ENCODE measurements at regions of chr18 and their contacts with region 1.

Region 1: GRCh38 chr18:6561420-6561861 is 146.7 kb upstream of the L3MBTL4 start:
- DNase-seq: peak; percentile 89 to 91
- H3K4me3 ChIP-seq: no peak overlapping the region
- H3K4me3 Mint-ChIP-seq: peak overlapping the region; percentile 56
- H3K27ac Mint-ChIP-seq: peak overlapping the region; percentile 79
- H3K4me1 ChIP-seq: peaks cover 71% of the 10 kb centered on the region
- H3K4me1 Mint-ChIP-seq: peaks cover 39% of the 10 kb centered on the region
- H3K27me3 ChIP-seq: no peaks in the 10 kb centered on the region
- H3K27me3 Mint-ChIP-seq: no peaks in the 10 kb centered on the region
- CTCF ChIP-seq: no peak

Region 2: GRCh38 chr18:6543330-6543908 is 18.0 kb before region 1 on chr18:
- CTCF ChIA-PET with region 1: interaction called, 6 read pairs
- POLR2A ChIA-PET with region 1: no interaction called
- intact Hi-C with region 1: loop called (anchors 1 kb)
- DNase-seq: peak in 1 of 2 experiments; percentile 35
- H3K4me3 ChIP-seq: no peak overlapping the region
- H3K4me3 Mint-ChIP-seq: no peak overlapping the region
- H3K27ac Mint-ChIP-seq: no peak overlapping the region
- H3K4me1 ChIP-seq: peaks cover 7% of the 10 kb centered on the region
- H3K4me1 Mint-ChIP-seq: peaks cover 7% of the 10 kb centered on the region
- H3K27me3 ChIP-seq: no peaks in the 10 kb centered on the region
- H3K27me3 Mint-ChIP-seq: no peaks in the 10 kb centered on the region
- CTCF ChIP-seq: peak; percentile 64 to 65

Region 3: DNA sequence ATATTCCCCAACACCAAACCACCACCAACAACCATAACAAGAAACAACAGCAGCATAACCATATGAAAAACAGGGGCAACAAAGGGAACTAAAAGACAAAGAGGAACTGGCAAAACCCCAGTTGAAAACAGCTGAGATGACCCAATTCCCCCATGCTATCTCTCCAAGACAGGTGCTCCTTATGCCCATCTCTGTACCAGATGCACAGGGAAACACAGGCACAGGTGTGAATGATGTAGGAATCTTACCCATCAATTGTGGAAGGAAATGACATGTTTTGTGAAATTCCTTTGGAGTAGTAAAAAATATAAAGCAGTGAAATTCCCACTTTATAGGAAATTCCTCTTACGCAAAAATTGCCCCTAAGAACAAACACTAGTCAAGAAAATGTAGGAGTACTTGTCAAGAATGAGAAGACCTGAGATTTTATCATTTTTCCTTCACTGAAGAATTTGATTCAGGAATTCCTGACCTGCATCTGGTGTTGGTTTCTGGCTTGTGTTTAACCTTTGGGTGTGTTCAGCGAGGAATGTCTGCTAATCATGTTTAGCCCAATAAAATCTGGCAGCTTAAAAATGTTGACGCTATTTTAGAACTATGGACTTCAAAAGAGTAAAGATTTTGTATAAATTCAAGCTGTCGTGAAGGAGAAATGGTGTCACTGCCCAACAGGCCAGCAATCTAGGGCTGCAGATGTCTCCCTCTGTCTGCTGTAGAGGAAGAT is 100.4 kb after region 1 on chr18:
- CTCF ChIA-PET with region 1: interaction called, 10 read pairs
- POLR2A ChIA-PET with region 1: no interaction called
- intact Hi-C with region 1: loop called (anchors 1 kb)
- DNase-seq: peak; percentile 77 to 79
- H3K4me3 ChIP-seq: no peak overlapping the region
- H3K4me3 Mint-ChIP-seq: peak overlapping the region; percentile 13
- H3K27ac Mint-ChIP-seq: peak overlapping the region; percentile 91
- H3K4me1 ChIP-seq: peaks cover 39% of the 10 kb centered on the region
- H3K4me1 Mint-ChIP-seq: peaks cover 32% of the 10 kb centered on the region
- H3K27me3 ChIP-seq: no peaks in the 10 kb centered on the region
- H3K27me3 Mint-ChIP-seq: no peaks in the 10 kb centered on the region
- CTCF ChIP-seq: peak in 1 of 2 experiments; percentile 13

Region 4: DNA sequence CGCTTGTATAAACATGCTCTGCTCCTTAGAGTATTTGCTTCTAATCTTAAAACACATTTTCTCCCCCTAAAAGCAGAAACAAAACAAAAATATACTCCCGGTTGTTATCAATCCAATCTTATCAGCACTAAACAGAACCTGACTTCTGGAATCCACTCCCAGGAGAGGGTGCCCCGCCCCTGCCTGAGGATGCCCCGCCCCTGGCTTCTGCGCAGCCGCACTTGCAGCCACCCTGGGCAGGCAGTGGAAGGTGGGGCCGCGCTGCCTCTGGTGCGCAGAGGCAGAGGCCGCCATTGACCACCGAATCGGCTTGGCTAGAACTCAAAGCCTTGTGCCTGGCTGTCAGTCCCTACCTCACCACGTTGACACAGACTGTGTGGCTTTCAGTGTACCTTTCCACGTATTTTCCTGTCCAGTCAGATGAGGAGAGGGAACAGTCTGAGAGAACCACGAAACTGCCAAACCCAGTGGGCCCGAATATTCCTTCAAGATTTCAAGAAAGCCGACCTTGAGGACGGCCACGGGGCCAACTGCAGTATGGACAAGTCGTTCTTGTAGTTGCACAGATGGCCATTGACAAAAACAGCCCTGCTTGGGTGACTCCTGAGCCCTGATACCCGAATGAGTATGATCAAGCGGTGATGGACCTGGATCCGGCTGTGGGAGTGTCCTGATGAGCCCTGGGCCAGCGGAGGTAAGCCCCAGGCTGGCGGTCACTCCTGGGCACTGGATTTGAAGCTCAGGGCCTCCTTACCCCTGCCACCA is 121.9 kb after region 1 on chr18:
- CTCF ChIA-PET with region 1: no interaction called
- POLR2A ChIA-PET with region 1: no interaction called
- intact Hi-C with region 1: no loop called
- DNase-seq: peak; percentile 85 to 91
- H3K4me3 ChIP-seq: no peak overlapping the region; the same call in 1 of the 2 replicates
- H3K4me3 Mint-ChIP-seq: peak overlapping the region; percentile 78
- H3K27ac Mint-ChIP-seq: peak overlapping the region; percentile 86
- H3K4me1 ChIP-seq: peaks cover 25% of the 10 kb centered on the region
- H3K4me1 Mint-ChIP-seq: peaks cover 11% of the 10 kb centered on the region
- H3K27me3 ChIP-seq: no peaks in the 10 kb centered on the region
- H3K27me3 Mint-ChIP-seq: no peaks in the 10 kb centered on the region
- CTCF ChIP-seq: no peak

Region 5: GRCh38 chr18:6729247-6730091 is 168.0 kb after region 1 on chr18 and contains the start of gene ARHGAP28:
- CTCF ChIA-PET with region 1: interaction called, 3 read pairs
- POLR2A ChIA-PET with region 1: interaction called, 4 read pairs
- intact Hi-C with region 1: loop called (anchors 1 kb)
- DNase-seq: peak; percentile 96 to 97
- H3K4me3 ChIP-seq: peak within 1 kb of the TSS; percentile 72
- H3K4me3 Mint-ChIP-seq: peak within 1 kb of the TSS; percentile 94
- H3K27ac Mint-ChIP-seq: peak within 1 kb of the TSS; percentile 96
- H3K4me1 ChIP-seq: peaks cover 39% of the 10 kb centered on the region
- H3K4me1 Mint-ChIP-seq: peaks cover 34% of the 10 kb centered on the region
- H3K27me3 ChIP-seq: no peaks in the 10 kb centered on the region
- H3K27me3 Mint-ChIP-seq: no peaks in the 10 kb centered on the region
- CTCF ChIP-seq: peak in 1 of 2 experiments; percentile 39
- total RNA-seq, gene ARHGAP28: 92.2 and 118 TPM in 2 replicates

Region 6: GRCh38 chr18:7158216-7158615 is 596.8 kb after region 1 on chr18:
- CTCF ChIA-PET with region 1: no interaction called
- POLR2A ChIA-PET with region 1: no interaction called
- intact Hi-C with region 1: loop called (anchors 5 kb)
- DNase-seq: peak; percentile 78 to 87
- H3K4me3 ChIP-seq: peak overlapping the region; percentile 18; the same call in 1 of the 2 replicates
- H3K4me3 Mint-ChIP-seq: peak overlapping the region; percentile 67
- H3K27ac Mint-ChIP-seq: peak overlapping the region; percentile 77
- H3K4me1 ChIP-seq: peaks cover 60% of the 10 kb centered on the region
- H3K4me1 Mint-ChIP-seq: peaks cover 41% of the 10 kb centered on the region
- H3K27me3 ChIP-seq: no peaks in the 10 kb centered on the region
- H3K27me3 Mint-ChIP-seq: no peaks in the 10 kb centered on the region
- CTCF ChIP-seq: no peak

Measured in Caco-2 (cell line).